Stomach (tissue), 19 donors: ENCODE measurements at regions of chr17 and their contacts with region 1.

Region 1: GRCh38 chr17:39153599-39154051 is 2.2 kb upstream of the PLXDC1 start:
- DNase-seq: peak; percentile 95 to 96
- H3K4me3 ChIP-seq: peak overlapping the region; percentile 58 to 96 (median 66)
- H3K27ac ChIP-seq: peak overlapping the region; percentile 77 to 96 (median 90)
- H3K4me1 ChIP-seq: peaks cover 21 to 42% (median 32%) of the 10 kb centered on the region in 4 donors
- H3K27me3 ChIP-seq: peaks cover 0 to 33% (median 23%) of the 10 kb centered on the region in 3 donors
- CTCF ChIP-seq: no peak
- EP300 ChIP-seq: no peak
- POLR2A ChIP-seq: no peak

Region 2: GRCh38 chr17:38982858-38983746 is 170.5 kb before region 1 on chr17:
- intact Hi-C with region 1: loop called (anchors 5 kb)
- DNase-seq: peak; percentile 49 to 90
- H3K4me3 ChIP-seq: no peak overlapping the region
- H3K27ac ChIP-seq: no peak overlapping the region
- H3K4me1 ChIP-seq: peaks cover 0 to 21% (median 2%) of the 10 kb centered on the region in 4 donors
- H3K27me3 ChIP-seq: no peaks in the 10 kb centered on the region
- CTCF ChIP-seq: peak in 5 of 7 experiments; percentile 53 to 77 (median 73)
- EP300 ChIP-seq: no peak
- POLR2A ChIP-seq: no peak

Region 3: GRCh38 chr17:39073916-39074315 is 79.7 kb before region 1 on chr17:
- intact Hi-C with region 1: loop called (anchors 5 kb)
- DNase-seq: no peak
- H3K4me3 ChIP-seq: no peak overlapping the region
- H3K27ac ChIP-seq: no peak overlapping the region
- H3K4me1 ChIP-seq: no peaks in the 10 kb centered on the region
- H3K27me3 ChIP-seq: no peaks in the 10 kb centered on the region
- CTCF ChIP-seq: no peak
- EP300 ChIP-seq: no peak
- POLR2A ChIP-seq: no peak